HEK293 (cell line): ENCODE measurements at regions of chr12 and their contacts with region 1.

Region 1: GRCh38 chr12:1634590-1635191 is 5.7 kb downstream of the WNT5B start:
- H3K4me3 ChIP-seq: no peak overlapping the region
- H3K27ac ChIP-seq: no peak overlapping the region
- H3K4me1 ChIP-seq: no peaks in the 10 kb centered on the region; the same call in 1 of the 2 replicates
- CTCF ChIP-seq: peak; percentile 56

Region 2: GRCh38 chr12:1619587-1619986 is 15.1 kb before region 1 on chr12:
- CTCF ChIA-PET with region 1: interaction called, 15 read pairs
- POLR2A ChIA-PET with region 1: no interaction called
- H3K4me3 ChIP-seq: no peak overlapping the region
- H3K27ac ChIP-seq: no peak overlapping the region
- H3K4me1 ChIP-seq: peaks cover 7% of the 10 kb centered on the region
- CTCF ChIP-seq: no peak

Region 3: GRCh38 chr12:1644534-1645438 is 10.1 kb after region 1 on chr12:
- CTCF ChIA-PET with region 1: interaction called, 25 read pairs
- POLR2A ChIA-PET with region 1: no interaction called
- H3K4me3 ChIP-seq: no peak overlapping the region
- H3K27ac ChIP-seq: no peak overlapping the region
- H3K4me1 ChIP-seq: peaks cover 2% of the 10 kb centered on the region; the same call in 1 of the 2 replicates
- CTCF ChIP-seq: no peak

Region 4: DNA sequence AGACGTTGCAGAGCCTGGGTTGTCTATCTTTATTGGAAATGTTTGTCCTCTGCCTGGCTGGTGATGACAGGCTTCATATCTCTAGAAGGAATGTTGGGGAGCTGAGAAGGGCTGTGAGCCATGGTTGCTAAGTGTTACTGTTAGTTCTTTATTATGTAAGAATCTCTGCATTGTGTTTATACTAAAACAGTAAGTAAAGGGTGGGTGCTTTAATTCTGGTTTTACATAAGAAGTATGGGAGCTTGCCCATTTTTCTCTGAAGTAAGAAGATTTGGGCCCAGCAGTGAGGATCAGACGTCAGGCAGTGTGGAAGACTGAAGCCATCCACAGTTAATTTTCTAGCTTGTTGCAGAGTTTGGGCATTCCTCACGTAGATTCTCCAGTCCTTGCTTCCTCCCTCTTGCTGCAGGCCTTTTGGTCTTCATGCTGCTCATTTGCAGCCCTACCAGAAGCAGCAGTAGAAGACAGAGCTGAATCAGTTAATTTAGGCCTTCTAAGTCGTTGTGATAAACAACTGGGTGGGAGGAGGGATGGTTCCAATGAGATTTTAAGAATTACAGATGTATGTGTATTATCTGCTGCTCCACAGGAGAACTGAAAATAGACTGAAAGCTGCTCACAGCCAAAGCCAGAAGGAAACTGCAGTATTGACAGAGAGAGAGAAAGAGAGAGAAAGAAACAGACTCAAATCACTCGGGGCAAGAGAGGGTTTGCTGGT is 15.7 kb after region 1 on chr12:
- CTCF ChIA-PET with region 1: interaction called, 25 read pairs
- POLR2A ChIA-PET with region 1: no interaction called
- H3K4me3 ChIP-seq: no peak overlapping the region
- H3K27ac ChIP-seq: no peak overlapping the region
- H3K4me1 ChIP-seq: no peaks in the 10 kb centered on the region
- CTCF ChIP-seq: no peak

Region 5: DNA sequence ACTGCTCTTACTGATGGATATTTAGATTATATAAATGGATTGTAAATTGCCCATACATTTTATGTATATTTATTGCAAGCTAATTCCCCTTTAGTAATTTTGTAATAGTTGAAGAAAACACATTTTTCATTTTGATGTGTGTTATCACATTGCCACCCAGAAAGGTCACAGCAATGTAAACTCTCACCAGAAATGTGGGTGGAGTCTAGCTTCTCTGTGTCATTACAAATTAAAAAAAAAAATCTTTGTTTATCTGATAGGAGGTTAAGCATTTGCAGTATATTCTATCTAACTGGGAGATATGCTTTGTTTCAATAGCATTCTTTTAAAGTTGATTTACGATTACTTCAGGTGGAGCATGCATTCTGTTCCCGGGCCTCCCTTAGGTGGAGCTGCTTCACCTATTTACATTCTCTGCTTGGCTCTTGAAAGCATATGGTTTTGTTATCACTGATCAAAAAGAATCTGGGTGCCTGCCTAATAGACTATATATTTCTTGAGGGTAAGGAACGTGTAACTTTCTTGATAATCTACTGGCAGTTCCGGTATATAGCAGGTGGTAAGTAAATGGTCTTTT is 64.0 kb after region 1 on chr12:
- CTCF ChIA-PET with region 1: no interaction called
- POLR2A ChIA-PET with region 1: no interaction called
- H3K4me3 ChIP-seq: no peak overlapping the region
- H3K27ac ChIP-seq: no peak overlapping the region
- H3K4me1 ChIP-seq: peaks cover 21% of the 10 kb centered on the region
- CTCF ChIP-seq: no peak